ENCODE measurements at regions of chr2 and their contacts with region 1.

Region 1: GRCh38 chr2:203014456-203015199 is at the start of gene NBEAL1:
- DNase-seq: peak; percentile 100
- ATAC-seq: peak; percentile 97
- H3K4me3 ChIP-seq: peak within 1 kb of the TSS; percentile 95
- H3K27ac ChIP-seq: peak within 1 kb of the TSS; percentile 94
- H3K4me1 ChIP-seq: peaks cover 2% of the 10 kb centered on the region; the same call in 1 of the 2 replicates
- H3K27me3 ChIP-seq: no peaks in the 10 kb centered on the region
- CTCF ChIP-seq: no peak
- POLR2A ChIP-seq: peak; percentile 90
- RAD21 ChIP-seq: no peak
- total RNA-seq, gene NBEAL1: 38.0 and 52.2 TPM in 2 replicates

Region 2: GRCh38 chr2:202408546-202409140 is 606.0 kb before region 1 on chr2:
- CTCF ChIA-PET with region 1: no interaction called
- POLR2A ChIA-PET with region 1: no interaction called
- dilution Hi-C with region 1: no loop called
- in situ Hi-C with region 1: no loop called
- intact Hi-C with region 1: no loop called
- DNase-seq: no peak
- ATAC-seq: peak; percentile 51
- H3K4me3 ChIP-seq: no peak overlapping the region
- H3K27ac ChIP-seq: no peak overlapping the region
- H3K4me1 ChIP-seq: 0 out of 2 replicates have a peak, but pooled peaks cover 2% of the 10 kb centered on the region
- H3K27me3 ChIP-seq: no peaks in the 10 kb centered on the region
- CTCF ChIP-seq: no peak
- POLR2A ChIP-seq: no peak
- RAD21 ChIP-seq: no peak

Region 3: GRCh38 chr2:202918860-202919259 is 95.8 kb before region 1 on chr2:
- CTCF ChIA-PET with region 1: no interaction called
- POLR2A ChIA-PET with region 1: no interaction called
- dilution Hi-C with region 1: no loop called
- in situ Hi-C with region 1: no loop called
- intact Hi-C with region 1: loop called (anchors 5 kb)
- DNase-seq: no peak
- ATAC-seq: no peak
- H3K4me3 ChIP-seq: no peak overlapping the region
- H3K27ac ChIP-seq: no peak overlapping the region
- H3K4me1 ChIP-seq: no peaks in the 10 kb centered on the region
- H3K27me3 ChIP-seq: no peaks in the 10 kb centered on the region
- CTCF ChIP-seq: no peak
- POLR2A ChIP-seq: no peak
- RAD21 ChIP-seq: no peak

Measured in IMR-90 (cell line).